Lower lobe of right lung (tissue), 2 donors: ENCODE measurements at regions of chr11 and their contacts with region 1.

Region 1: DNA sequence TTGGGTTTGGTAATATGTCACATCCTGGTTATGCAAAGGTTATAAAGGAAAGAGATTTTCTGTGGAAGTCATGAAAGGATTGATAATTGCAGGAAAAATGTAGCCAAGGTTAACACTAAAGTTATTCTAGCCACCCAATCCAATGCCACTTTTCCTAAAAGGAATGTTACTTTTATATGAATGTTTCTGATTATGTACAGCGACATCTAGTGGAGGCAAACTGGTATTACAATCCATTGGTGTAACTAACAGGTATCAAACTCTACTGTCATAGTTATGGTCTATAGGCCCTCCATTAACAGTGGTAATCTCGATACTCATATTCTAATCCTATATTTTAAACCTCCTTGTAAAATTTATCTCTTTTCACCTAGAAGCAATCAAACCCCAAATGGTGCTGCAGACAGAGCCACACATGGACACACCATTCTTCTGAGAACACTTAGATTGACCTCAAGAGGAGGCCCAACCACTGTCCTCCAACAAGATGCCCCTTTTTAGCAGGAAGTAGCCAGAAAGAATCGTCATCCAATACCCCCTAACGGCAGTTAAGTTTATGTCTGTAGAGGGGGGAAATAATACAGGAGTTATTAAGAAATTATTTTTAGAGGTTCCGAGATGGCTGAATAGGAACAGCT is 74.9 kb upstream of the RAG2 start:
- DNase-seq: no peak
- ATAC-seq: no peak
- H3K4me3 ChIP-seq: no peak overlapping the region
- H3K27ac ChIP-seq: no peak overlapping the region
- H3K4me1 ChIP-seq: no peaks in the 10 kb centered on the region
- H3K27me3 ChIP-seq: no peaks in the 10 kb centered on the region
- CTCF ChIP-seq: peak; percentile 84

Region 2: GRCh38 chr11:36564376-36565030 is 108.4 kb before region 1 on chr11:
- intact Hi-C with region 1: loop called (anchors 10 kb)
- DNase-seq: no peak
- ATAC-seq: peak; percentile 52 to 77
- H3K4me3 ChIP-seq: peak overlapping the region; percentile 41
- H3K27ac ChIP-seq: no peak overlapping the region
- H3K4me1 ChIP-seq: no peaks in the 10 kb centered on the region
- H3K27me3 ChIP-seq: no peaks in the 10 kb centered on the region
- CTCF ChIP-seq: peak; percentile 68